Activated CD4-positive, alpha-beta memory T cell treated with anti-CD3 and anti-CD28 coated beads for 36 hours (primary cell): ENCODE measurements at regions of chr3 and their contacts with region 1.

Region 1: GRCh38 chr3:143119009-143119914 is at the start of gene CHST2:
- DNase-seq: peak; percentile 78
- H3K4me3 Mint-ChIP-seq: peak within 1 kb of the TSS; percentile 84
- H3K27ac Mint-ChIP-seq: peak within 1 kb of the TSS; percentile 45
- H3K4me1 Mint-ChIP-seq: peaks cover 19% of the 10 kb centered on the region
- H3K27me3 Mint-ChIP-seq: peaks cover 8% of the 10 kb centered on the region
- total RNA-seq, gene CHST2: 4.5 to 4.7 TPM

Region 2: DNA sequence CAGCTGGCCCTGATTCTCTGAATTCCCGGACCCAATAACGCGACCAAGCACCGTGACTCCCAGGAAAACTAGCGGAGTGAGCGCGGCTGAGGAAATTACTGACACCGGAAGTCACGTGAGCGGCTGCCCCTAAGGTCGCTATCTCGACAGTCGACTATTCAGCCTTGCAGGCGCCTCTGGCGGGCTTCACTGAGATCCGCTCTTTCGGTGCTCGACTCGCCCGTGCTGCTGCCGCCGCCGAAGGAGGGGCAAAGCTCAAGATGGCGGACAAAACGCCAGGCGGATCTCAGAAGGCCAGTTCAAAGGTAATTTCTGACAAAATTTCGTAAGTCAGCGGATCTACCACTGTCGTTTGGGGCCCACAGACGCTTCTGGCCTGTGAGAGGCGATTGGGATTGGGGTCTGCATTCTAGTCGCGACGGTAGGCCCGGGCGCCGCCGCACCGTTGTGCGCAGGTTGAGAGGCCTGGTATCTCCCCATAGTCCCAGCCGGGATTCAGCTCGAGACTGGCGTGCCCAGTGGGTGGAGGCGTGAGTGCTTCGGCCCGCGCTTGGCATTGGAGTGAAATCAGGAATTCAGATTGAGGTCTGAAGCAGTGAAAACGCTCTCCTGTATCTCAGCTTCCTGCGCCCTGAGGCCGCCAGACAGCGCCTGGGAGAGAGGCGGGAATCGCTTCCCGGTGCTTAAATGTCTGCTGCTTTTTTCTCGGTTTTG is 117.7 kb before region 1 on chr3 and contains the start of gene U2SURP:
- CTCF ChIA-PET with region 1: interaction called, 4 read pairs
- POLR2A ChIA-PET with region 1: interaction called, 3 read pairs
- intact Hi-C with region 1: loop called (anchors 5 kb)
- DNase-seq: peak; percentile 95
- H3K4me3 Mint-ChIP-seq: peak within 1 kb of the TSS; percentile 88
- H3K27ac Mint-ChIP-seq: peak within 1 kb of the TSS; percentile 96
- H3K4me1 Mint-ChIP-seq: peaks cover 34% of the 10 kb centered on the region
- H3K27me3 Mint-ChIP-seq: no peaks in the 10 kb centered on the region
- total RNA-seq, gene U2SURP: 178 to 182 TPM

Region 3: DNA sequence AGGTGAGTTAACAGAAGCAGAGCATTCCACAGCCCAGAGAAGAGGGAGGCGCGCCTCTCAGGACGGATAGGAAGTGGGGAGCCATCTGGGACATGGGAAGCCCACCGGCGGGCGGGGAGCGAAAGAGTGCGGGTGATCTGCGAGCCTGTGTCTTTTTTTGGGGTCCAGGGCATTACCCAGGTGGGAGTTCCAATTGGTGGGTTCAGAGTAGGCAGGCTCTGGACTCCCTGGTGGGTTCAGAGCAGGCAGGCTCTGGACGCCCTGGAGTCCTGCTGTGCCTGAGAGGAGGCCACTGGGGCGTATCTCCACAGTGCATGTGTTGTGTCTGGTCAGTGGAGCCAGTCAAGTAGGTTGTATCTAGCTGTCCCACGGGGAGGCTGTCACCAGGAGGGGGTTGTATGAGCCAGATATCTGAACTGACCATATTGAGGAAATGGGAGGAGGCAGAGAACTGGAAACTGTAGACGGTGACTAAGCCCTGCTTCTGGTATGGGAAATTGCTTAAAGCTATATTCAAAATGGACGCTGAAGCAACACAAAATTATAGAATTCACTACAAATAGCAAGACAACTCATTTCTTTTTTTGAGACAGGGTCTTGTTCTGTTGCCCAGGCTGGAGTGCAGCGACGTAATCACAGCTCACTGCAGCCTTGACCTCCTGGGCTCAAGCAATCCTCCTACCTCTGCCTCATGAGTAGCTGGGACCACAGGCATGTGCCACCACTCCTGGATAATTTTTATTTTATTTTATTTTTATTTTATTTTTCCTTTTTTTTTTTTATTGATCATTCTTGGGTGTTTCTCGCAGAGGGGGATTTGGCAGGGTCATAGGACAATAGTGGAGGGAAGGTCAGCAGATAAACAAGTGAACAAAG is 34.2 kb before region 1 on chr3:
- CTCF ChIA-PET with region 1: interaction called, 3 read pairs
- POLR2A ChIA-PET with region 1: no interaction called
- intact Hi-C with region 1: loop called (anchors 1 kb)
- DNase-seq: peak; percentile 36
- H3K4me3 Mint-ChIP-seq: peak overlapping the region; percentile 40
- H3K27ac Mint-ChIP-seq: no peak overlapping the region
- H3K4me1 Mint-ChIP-seq: peaks cover 34% of the 10 kb centered on the region
- H3K27me3 Mint-ChIP-seq: peaks cover 6% of the 10 kb centered on the region

Region 4: DNA sequence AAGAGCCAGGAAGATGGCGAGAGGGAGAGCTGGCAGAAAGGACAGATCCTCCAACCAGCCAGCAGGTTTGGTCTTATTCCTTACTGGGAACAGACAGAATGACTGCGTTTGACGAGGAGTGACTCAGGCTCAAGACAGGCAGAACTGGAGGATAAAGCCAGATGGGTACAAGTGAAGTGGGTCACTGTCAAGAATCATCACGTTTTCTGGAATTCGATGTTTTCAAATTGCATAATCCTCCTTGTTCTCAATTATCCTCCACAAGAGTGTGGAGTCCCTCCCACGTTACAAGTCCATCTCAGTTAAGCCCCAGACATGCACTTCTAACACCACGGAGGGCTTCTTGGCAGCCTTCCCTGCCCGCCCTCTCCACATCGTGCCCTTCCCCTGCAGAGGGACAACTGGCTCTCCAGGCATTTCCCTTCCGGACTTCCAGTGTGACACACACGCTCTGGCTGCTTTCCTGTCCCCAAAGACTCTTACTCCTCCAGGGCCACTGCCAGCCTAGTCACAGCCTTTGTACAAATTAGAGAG is 183.4 kb after region 1 on chr3:
- CTCF ChIA-PET with region 1: no interaction called
- POLR2A ChIA-PET with region 1: interaction called, 4 read pairs
- intact Hi-C with region 1: loop called (anchors 2 kb)
- DNase-seq: no peak
- H3K4me3 Mint-ChIP-seq: no peak overlapping the region
- H3K27ac Mint-ChIP-seq: no peak overlapping the region
- H3K4me1 Mint-ChIP-seq: no peaks in the 10 kb centered on the region
- H3K27me3 Mint-ChIP-seq: no peaks in the 10 kb centered on the region

Region 5: GRCh38 chr3:143433787-143434378 is 314.6 kb after region 1 on chr3:
- CTCF ChIA-PET with region 1: no interaction called
- POLR2A ChIA-PET with region 1: no interaction called
- intact Hi-C with region 1: loop called (anchors 5 kb)
- DNase-seq: peak; percentile 53
- H3K4me3 Mint-ChIP-seq: no peak overlapping the region
- H3K27ac Mint-ChIP-seq: no peak overlapping the region
- H3K4me1 Mint-ChIP-seq: no peaks in the 10 kb centered on the region
- H3K27me3 Mint-ChIP-seq: no peaks in the 10 kb centered on the region

Region 6: GRCh38 chr3:143644370-143645089 is 525.3 kb after region 1 on chr3:
- CTCF ChIA-PET with region 1: no interaction called
- POLR2A ChIA-PET with region 1: no interaction called
- intact Hi-C with region 1: loop called (anchors 1 kb)
- DNase-seq: peak; percentile 27
- H3K4me3 Mint-ChIP-seq: no peak overlapping the region
- H3K27ac Mint-ChIP-seq: no peak overlapping the region
- H3K4me1 Mint-ChIP-seq: no peaks in the 10 kb centered on the region
- H3K27me3 Mint-ChIP-seq: no peaks in the 10 kb centered on the region

Region 7: GRCh38 chr3:143751643-143752178 is 632.4 kb after region 1 on chr3:
- CTCF ChIA-PET with region 1: no interaction called
- POLR2A ChIA-PET with region 1: no interaction called
- intact Hi-C with region 1: loop called (anchors 5 kb)
- DNase-seq: peak; percentile 43
- H3K4me3 Mint-ChIP-seq: peak overlapping the region; percentile 58
- H3K27ac Mint-ChIP-seq: peak overlapping the region; percentile 86
- H3K4me1 Mint-ChIP-seq: peaks cover 39% of the 10 kb centered on the region
- H3K27me3 Mint-ChIP-seq: no peaks in the 10 kb centered on the region